HAP-1 (cell line): ENCODE measurements at regions of chr17 and their contacts with region 1.

Region 1: DNA sequence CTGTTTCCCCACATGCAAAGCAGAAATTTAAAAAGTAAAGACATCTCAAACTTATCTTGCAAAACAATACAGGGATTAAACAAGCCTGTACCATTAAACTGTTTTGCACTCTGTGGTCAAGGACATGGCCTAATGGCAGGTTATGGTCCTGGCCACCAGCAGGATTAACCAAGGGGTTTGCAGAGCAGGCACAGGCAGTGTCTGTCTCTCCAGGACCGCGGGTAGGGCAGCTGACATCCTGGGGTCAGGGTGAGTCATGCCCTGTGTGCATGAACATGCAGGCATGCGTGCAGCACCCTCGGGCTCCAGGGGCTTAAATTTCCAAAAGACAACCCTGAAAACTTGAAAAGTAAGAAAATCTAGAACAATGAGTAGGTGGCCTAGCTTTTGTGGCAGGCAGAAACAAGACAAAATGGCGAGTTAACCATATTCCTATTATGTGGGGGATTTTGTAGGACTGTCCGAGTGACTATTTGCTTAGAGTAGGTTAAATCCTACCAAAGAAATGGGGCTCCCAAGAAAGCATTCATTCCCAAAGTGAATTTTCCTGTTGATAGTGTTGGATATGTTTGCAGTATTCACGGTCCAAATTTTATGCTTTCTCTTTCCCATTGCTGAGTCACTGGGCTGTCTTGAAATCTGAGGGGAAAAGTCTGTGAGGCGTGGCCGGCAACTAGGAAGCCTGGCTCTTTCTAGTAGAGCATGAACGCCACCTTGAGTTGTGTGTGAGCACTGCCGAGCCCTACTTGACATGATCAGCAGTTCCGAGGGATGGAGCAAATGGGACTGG is 158.4 kb upstream of the FAM20A start:
- DNase-seq: peak; percentile 84 to 89
- H3K4me3 ChIP-seq: peak overlapping the region; percentile 21
- H3K4me1 ChIP-seq: peaks cover 15% of the 10 kb centered on the region
- H3K27me3 ChIP-seq: no peaks in the 10 kb centered on the region

Region 2: GRCh38 chr17:67993596-67994361 is 765.8 kb before region 1 on chr17:
- in situ Hi-C with region 1: loop called (anchors 25 kb)
- DNase-seq: peak; percentile 76 to 84
- H3K4me3 ChIP-seq: peak overlapping the region; percentile 71
- H3K4me1 ChIP-seq: peaks cover 23% of the 10 kb centered on the region
- H3K27me3 ChIP-seq: no peaks in the 10 kb centered on the region

Region 3: DNA sequence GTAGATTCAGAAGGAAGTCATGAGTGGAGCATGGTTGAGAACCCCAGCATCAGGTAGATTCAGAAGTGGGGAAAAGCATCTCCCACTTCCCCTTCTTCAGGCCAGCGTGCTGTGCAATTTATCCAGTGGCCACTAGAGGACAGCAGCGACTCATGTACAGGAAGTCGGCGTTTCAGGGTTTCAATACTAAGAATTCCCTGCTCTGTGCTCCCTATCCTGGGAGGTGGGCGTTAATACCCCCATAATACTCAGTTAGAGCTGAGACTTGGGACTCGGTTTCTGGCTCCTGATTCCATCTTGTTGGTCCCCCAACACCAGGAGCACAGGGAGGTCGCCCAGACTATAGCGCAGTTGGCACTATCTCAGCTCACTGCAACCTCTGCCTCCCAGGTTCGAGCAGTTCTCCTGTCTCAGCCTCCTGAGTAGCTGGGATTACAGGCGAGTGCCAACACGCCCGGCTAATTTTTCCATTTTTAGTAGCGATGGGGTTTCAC is 587.0 kb before region 1 on chr17:
- in situ Hi-C with region 1: loop called (anchors 25 kb)
- DNase-seq: peak; percentile 34 to 87
- H3K4me3 ChIP-seq: no peak overlapping the region
- H3K4me1 ChIP-seq: no peaks in the 10 kb centered on the region
- H3K27me3 ChIP-seq: no peaks in the 10 kb centered on the region

Region 4: DNA sequence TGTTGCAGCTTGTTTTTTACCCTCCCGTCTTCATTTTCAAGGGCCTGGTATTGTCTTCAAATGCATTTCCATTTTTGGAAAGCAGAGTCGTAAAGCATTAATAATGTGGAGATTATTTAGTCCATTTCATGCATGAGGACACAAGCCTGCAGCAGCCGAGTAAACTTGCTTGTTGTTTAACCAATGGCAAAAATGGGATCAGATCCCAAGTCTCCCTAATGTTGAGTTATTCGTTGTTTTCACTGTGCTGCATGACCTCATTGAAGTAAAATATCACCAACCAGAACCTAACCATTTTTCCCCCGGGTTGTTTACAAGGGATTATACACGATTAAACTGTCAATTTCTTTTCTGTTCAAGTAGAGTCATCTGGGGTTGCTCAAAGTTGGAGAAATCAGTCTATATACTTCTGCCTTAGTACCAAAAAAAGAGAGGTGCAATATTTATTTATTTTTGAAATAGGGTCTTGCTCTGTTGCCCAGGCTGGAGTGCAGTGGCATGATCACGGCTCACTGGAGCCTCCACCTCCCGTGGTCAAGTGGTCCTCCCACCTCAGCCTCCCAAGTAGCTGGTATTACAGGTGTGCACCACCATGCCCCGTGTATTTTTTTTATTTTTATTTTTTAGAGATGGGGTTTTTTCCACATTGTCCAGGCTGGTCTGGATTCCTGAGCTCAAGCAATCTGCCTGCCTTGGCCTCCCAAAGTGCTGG is 499.3 kb before region 1 on chr17:
- in situ Hi-C with region 1: loop called (anchors 10 kb)
- DNase-seq: no peak
- H3K4me3 ChIP-seq: no peak overlapping the region
- H3K4me1 ChIP-seq: peaks cover 15% of the 10 kb centered on the region
- H3K27me3 ChIP-seq: no peaks in the 10 kb centered on the region

Region 5: GRCh38 chr17:68539548-68540467 is 219.7 kb before region 1 on chr17:
- in situ Hi-C with region 1: loop called (anchors 5 kb)
- DNase-seq: no peak
- H3K4me3 ChIP-seq: no peak overlapping the region
- H3K4me1 ChIP-seq: peaks cover 11% of the 10 kb centered on the region
- H3K27me3 ChIP-seq: no peaks in the 10 kb centered on the region